ENCODE measurements at regions of chr19 and their contacts with region 1.

Region 1: DNA sequence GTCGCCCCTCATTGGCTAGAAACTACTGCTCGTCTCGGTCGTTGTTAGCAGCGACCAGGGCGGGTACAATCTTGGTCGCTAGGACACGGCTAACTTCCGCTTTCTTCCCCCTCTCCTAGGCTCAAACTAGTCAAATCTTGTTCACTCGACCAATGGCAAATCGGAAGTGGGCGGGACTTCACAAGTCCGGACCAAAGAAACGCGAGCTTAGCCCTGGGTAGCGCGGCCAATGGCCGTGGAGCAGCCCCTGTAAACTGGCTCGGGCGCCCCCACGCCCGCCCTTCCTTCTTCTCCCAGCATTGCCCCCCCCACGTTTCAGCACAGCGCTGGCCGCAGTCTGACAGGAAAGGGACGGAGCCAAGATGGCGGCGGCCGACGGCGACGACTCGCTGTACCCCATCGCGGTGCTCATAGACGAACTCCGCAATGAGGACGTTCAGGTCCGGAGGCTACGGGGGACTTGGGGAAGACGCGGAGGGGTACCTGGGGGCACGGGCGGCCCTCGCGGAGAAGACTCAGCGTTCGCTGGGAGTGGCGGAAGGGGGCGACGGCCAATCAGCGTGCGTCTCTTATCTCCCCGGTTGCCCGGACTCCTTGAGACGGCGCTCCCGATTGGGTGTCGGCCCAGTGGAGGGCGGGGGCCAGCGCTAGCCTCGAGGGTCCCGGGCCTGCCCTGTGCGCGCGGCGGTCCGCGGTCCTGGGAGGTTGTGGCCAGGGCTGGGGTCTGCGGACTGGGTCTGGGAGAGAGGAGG is at the start of gene PPP2R1A:
- DNase-seq: peak; percentile 100
- H3K4me3 Mint-ChIP-seq: peak within 1 kb of the TSS; percentile 97
- H3K27ac Mint-ChIP-seq: peak within 1 kb of the TSS; percentile 100
- H3K4me1 Mint-ChIP-seq: peaks cover 27% of the 10 kb centered on the region
- H3K27me3 Mint-ChIP-seq: no peaks in the 10 kb centered on the region
- CTCF ChIP-seq: no peak
- total RNA-seq, gene PPP2R1A: 194 and 211 TPM in 2 replicates

Region 2: GRCh38 chr19:52007806-52008557 is 181.9 kb before region 1 on chr19 and contains the start of gene ZNF615:
- CTCF ChIA-PET with region 1: no interaction called
- POLR2A ChIA-PET with region 1: interaction called, 10 read pairs
- intact Hi-C with region 1: no loop called
- DNase-seq: peak; percentile 88
- H3K4me3 Mint-ChIP-seq: peak within 1 kb of the TSS; percentile 99
- H3K27ac Mint-ChIP-seq: peak within 1 kb of the TSS; percentile 98
- H3K4me1 Mint-ChIP-seq: peaks cover 8% of the 10 kb centered on the region
- H3K27me3 Mint-ChIP-seq: no peaks in the 10 kb centered on the region
- CTCF ChIP-seq: no peak
- total RNA-seq, gene ZNF615: 7.3 and 9.0 TPM in 2 replicates

Region 3: GRCh38 chr19:52095172-52096014 is 94.5 kb before region 1 on chr19 and contains the start of gene ZNF841:
- CTCF ChIA-PET with region 1: interaction called, 3 read pairs
- POLR2A ChIA-PET with region 1: interaction called, 12 read pairs
- intact Hi-C with region 1: no loop called
- DNase-seq: peak; percentile 96
- H3K4me3 Mint-ChIP-seq: peak within 1 kb of the TSS; percentile 92
- H3K27ac Mint-ChIP-seq: peak within 1 kb of the TSS; percentile 93
- H3K4me1 Mint-ChIP-seq: peaks cover 25% of the 10 kb centered on the region
- H3K27me3 Mint-ChIP-seq: no peaks in the 10 kb centered on the region
- CTCF ChIP-seq: no peak
- total RNA-seq, gene ZNF841: 40.9 and 49.8 TPM in 2 replicates

Region 4: GRCh38 chr19:52120286-52120685 is 69.6 kb before region 1 on chr19:
- CTCF ChIA-PET with region 1: no interaction called
- POLR2A ChIA-PET with region 1: no interaction called
- intact Hi-C with region 1: no loop called
- DNase-seq: no peak
- H3K4me3 Mint-ChIP-seq: no peak overlapping the region
- H3K27ac Mint-ChIP-seq: no peak overlapping the region
- H3K4me1 Mint-ChIP-seq: no peaks in the 10 kb centered on the region
- H3K27me3 Mint-ChIP-seq: no peaks in the 10 kb centered on the region
- CTCF ChIP-seq: no peak

Region 5: DNA sequence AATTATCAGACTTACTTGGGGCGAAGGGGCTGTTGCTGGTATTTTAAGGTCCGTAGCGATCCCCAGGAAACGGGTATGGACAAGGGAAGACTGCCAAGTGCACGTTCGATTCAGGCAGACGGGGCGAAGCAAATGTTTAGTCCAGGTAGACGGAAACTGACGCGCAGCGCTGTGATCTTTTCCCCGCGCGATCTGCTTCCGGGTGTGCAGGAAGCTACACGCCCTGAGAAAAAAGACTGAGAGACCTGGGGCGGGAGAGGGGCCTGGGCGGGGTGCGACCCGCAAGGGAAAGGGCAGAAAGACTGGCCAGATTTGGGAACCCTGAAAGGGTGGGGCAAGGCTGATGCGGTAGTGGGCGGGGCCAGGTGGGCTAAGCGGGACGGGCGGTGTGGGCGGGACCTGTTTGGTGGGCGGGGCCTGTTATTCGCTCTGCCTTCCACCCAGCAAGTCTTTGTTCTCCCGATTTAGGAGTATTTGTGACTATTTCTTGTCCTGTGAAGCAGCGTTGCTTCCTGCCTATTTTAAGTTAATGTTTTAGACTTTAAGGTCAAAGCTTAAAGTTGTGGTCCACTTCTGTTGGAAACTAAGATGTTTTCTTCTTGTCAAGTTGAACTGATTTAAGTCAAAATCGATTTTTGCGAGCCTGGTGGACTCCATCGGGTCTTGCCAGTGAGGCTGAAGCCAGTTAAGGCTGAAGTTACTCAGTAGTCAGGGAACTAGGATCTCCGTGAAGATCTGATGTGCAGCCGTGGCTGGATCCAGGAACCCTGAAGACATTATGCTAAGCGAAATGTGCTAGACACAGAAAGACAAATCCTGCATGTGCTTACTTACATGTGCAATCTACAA is 18.4 kb before region 1 on chr19 and contains the start of gene ZNF836:
- CTCF ChIA-PET with region 1: interaction called, 5 read pairs
- POLR2A ChIA-PET with region 1: interaction called, 43 read pairs
- intact Hi-C with region 1: no loop called
- DNase-seq: peak; percentile 83
- H3K4me3 Mint-ChIP-seq: peak within 1 kb of the TSS; percentile 99
- H3K27ac Mint-ChIP-seq: peak within 1 kb of the TSS; percentile 60
- H3K4me1 Mint-ChIP-seq: peaks cover 11% of the 10 kb centered on the region
- H3K27me3 Mint-ChIP-seq: no peaks in the 10 kb centered on the region
- CTCF ChIP-seq: no peak
- total RNA-seq, gene ZNF836: 4.3 and 7.7 TPM in 2 replicates

Region 6: GRCh38 chr19:52464798-52465470 is 275.0 kb after region 1 on chr19:
- CTCF ChIA-PET with region 1: no interaction called
- POLR2A ChIA-PET with region 1: no interaction called
- intact Hi-C with region 1: no loop called
- DNase-seq: no peak
- H3K4me3 Mint-ChIP-seq: no peak overlapping the region
- H3K27ac Mint-ChIP-seq: no peak overlapping the region
- H3K4me1 Mint-ChIP-seq: no peaks in the 10 kb centered on the region
- H3K27me3 Mint-ChIP-seq: no peaks in the 10 kb centered on the region
- CTCF ChIP-seq: no peak

Measured in MCF 10A (cell line).